HepG2 (cell line): ENCODE measurements at regions of chr1 and their contacts with region 1.

Region 1: DNA sequence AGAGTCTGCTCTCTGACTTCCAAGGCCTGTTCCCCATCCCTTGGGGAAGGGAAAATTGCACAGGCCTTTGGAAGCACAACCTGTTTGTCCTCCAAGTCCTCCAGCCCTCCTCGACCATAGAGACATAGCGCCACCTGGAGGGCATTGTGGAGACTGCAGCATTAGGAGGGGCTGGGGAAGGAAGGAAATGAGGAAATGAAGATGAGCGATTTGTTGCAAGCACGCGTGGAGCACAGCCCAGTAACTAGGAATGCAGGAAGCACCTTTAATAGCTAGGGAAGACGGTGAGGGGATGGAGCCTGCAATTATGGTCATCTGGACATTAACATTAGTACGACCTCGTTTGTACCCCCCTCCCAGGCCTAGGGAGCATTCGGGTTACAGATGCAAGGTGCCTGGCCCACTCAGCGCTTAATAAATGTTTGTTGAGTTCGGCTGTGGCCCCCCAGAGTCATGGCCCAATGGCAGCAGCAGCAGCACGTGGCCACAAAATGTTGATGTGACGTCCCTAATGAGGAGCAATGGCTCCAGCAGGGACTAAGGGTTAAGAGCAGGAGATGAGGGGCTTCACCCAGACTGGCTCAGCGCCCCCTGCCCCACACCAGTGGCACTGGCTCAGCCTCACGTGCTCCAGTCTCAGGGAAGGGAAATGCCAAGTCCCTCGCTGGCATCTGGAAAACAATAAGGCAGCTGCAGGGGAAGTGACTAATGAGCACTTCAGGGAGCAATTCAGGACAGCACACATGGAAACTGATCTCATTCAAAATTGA is 8.0 kb upstream of the CAMK2N1 start:
- DNase-seq: peak; percentile 79
- ATAC-seq: peak; percentile 74
- H3K4me3 ChIP-seq: peak overlapping the region in 2 of 3 experiments; percentile 34 to 49; a peak in 3 of 6 replicates
- H3K27ac ChIP-seq: no peak overlapping the region
- H3K4me1 ChIP-seq: peaks cover 57% of the 10 kb centered on the region
- H3K27me3 ChIP-seq: peaks cover 0 to 10% of the 10 kb centered on the region in 2 experiments; a peak in 4 of 5 replicates
- CTCF ChIP-seq: peak; percentile 99
- EP300 ChIP-seq: no peak
- POLR2A ChIP-seq: no peak
- RAD21 ChIP-seq: peak; percentile 98

Region 2: DNA sequence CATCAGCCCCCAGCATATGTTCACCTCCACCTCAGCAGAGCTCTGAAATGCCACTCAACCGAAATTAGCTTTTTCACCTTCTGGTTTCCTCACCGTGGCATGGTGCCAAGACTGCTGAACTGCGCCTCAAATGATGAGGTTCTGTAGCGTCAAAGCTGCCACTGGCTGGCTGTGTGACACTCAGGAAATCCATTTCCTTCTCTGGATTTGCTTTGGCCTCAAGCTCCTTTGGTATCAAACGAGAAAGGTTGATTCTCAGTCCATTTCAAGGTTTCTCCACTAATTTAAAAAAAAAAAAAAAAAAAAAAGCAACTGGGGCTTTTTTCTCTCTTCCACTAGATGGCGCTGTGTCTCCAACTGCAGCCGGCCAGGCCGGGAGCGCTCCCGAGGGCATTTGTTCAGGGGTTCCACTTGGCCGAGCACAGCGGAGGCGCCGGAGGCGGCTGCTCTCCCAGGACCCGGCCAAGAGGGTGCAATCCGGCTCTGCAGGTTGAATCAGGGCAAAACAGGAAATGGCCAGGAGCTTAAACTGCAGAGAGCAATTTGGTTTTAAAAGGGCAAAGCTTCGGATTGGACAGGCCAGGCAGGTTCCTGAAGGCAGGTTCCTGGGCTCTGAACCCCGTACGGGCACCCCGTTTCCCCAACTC is 281.2 kb before region 1 on chr1:
- CTCF ChIA-PET with region 1: interaction called, 13 read pairs
- POLR2A ChIA-PET with region 1: no interaction called
- in situ Hi-C with region 1: no loop called
- intact Hi-C with region 1: loop called (anchors 1 kb)
- DNase-seq: peak; percentile 31
- ATAC-seq: peak; percentile 86
- H3K4me3 ChIP-seq: peak overlapping the region in 1 of 3 experiments; percentile 38; a peak in 1 of 6 replicates
- H3K27ac ChIP-seq: no peak overlapping the region
- H3K4me1 ChIP-seq: no peaks in the 10 kb centered on the region; the same call in 1 of the 2 replicates
- H3K27me3 ChIP-seq: peaks cover 0 to 39% of the 10 kb centered on the region in 2 experiments; a peak in 3 of 5 replicates
- CTCF ChIP-seq: peak; percentile 68
- EP300 ChIP-seq: no peak
- POLR2A ChIP-seq: no peak
- RAD21 ChIP-seq: peak; percentile 44; the same call in 1 of the 2 replicates

Region 3: DNA sequence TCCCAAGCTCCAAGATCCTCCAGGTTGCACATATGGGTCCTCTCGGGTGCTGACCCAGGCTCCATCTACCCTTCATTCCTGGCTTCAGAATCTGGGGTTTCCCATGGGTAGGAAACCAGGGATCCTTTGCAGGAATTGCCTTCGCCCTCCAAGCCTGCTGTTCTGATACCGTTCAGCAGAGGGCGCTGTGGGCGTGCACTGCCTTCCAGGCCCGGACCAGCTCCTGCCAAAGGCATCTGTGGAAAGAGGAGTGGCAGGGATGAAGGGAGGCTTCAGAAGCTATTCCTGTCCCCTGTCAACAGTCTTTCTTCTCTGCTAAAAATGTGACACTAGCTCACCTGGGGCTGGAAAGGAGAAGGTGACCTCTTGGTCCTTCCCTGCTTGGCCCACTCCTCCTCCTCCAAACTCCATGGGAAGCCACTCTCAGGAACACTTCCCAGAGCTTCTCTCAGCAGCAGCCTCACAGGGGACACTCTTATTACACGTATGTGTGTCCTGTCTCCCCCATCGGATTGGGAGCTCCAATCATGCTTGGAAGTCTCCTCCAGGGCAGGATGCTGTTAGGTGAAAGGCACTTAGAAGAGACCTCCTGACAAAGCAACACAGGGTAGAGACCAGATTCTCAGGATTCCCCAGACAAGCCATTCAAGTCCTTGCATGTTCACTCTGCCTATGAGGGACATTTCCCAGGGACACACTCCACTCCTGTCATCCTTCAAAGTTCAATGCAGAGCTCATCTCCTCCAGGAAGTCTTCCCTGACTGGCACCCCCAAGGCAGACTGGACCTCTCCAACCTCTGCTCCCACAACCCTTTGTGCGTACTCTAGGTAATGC is 132.0 kb before region 1 on chr1:
- CTCF ChIA-PET with region 1: interaction called, 14 read pairs
- POLR2A ChIA-PET with region 1: no interaction called
- in situ Hi-C with region 1: loop called (anchors 5 kb)
- intact Hi-C with region 1: loop called (anchors 5 kb)
- DNase-seq: peak; percentile 13
- ATAC-seq: peak; percentile 35; the same call in 2 of the 3 replicates
- H3K4me3 ChIP-seq: no peak overlapping the region
- H3K27ac ChIP-seq: no peak overlapping the region
- H3K4me1 ChIP-seq: peaks cover 18% of the 10 kb centered on the region
- H3K27me3 ChIP-seq: peaks cover 5 to 47% of the 10 kb centered on the region in 2 experiments; a peak in 4 of 5 replicates
- CTCF ChIP-seq: peak; percentile 86
- EP300 ChIP-seq: no peak
- POLR2A ChIP-seq: no peak
- RAD21 ChIP-seq: peak; percentile 43; the same call in 1 of the 2 replicates

Region 4: GRCh38 chr1:20430355-20431175 is 63.5 kb before region 1 on chr1:
- CTCF ChIA-PET with region 1: interaction called, 7 read pairs
- POLR2A ChIA-PET with region 1: no interaction called
- in situ Hi-C with region 1: loop called (anchors 10 kb)
- intact Hi-C with region 1: loop called (anchors 1 kb)
- DNase-seq: peak; percentile 24
- ATAC-seq: peak; percentile 80
- H3K4me3 ChIP-seq: no peak overlapping the region
- H3K27ac ChIP-seq: no peak overlapping the region
- H3K4me1 ChIP-seq: no peaks in the 10 kb centered on the region
- H3K27me3 ChIP-seq: peaks cover 0 to 11% of the 10 kb centered on the region in 2 experiments; a peak in 2 of 5 replicates
- CTCF ChIP-seq: peak; percentile 91
- EP300 ChIP-seq: no peak
- POLR2A ChIP-seq: no peak
- RAD21 ChIP-seq: peak; percentile 41; the same call in 1 of the 2 replicates

Region 5: GRCh38 chr1:20837554-20838192 is 343.6 kb after region 1 on chr1:
- CTCF ChIA-PET with region 1: no interaction called
- POLR2A ChIA-PET with region 1: no interaction called
- in situ Hi-C with region 1: no loop called
- intact Hi-C with region 1: no loop called
- DNase-seq: no peak
- ATAC-seq: no peak
- H3K4me3 ChIP-seq: no peak overlapping the region
- H3K27ac ChIP-seq: no peak overlapping the region
- H3K4me1 ChIP-seq: no peaks in the 10 kb centered on the region
- H3K27me3 ChIP-seq: no peaks in the 10 kb centered on the region
- CTCF ChIP-seq: no peak
- EP300 ChIP-seq: no peak
- POLR2A ChIP-seq: no peak
- RAD21 ChIP-seq: no peak